Activated CD8-positive, alpha-beta T cell treated with anti-CD3 and anti-CD28 coated beads, Interleukin-2, amount 10 ng/mL, durations not matched to agents 7 days and 5 days (primary cell): ENCODE measurements at regions of chr17 and their contacts with region 1.

Region 1: GRCh38 chr17:36148559-36149295 is 27.7 kb downstream of the TBC1D3B start:
- DNase-seq: peak; percentile 76
- ATAC-seq: peak; percentile 95
- H3K4me3 Mint-ChIP-seq: no peak overlapping the region
- H3K27ac Mint-ChIP-seq: no peak overlapping the region
- H3K4me1 Mint-ChIP-seq: peaks cover 8% of the 10 kb centered on the region
- H3K27me3 Mint-ChIP-seq: peaks cover 32% of the 10 kb centered on the region

Region 2: DNA sequence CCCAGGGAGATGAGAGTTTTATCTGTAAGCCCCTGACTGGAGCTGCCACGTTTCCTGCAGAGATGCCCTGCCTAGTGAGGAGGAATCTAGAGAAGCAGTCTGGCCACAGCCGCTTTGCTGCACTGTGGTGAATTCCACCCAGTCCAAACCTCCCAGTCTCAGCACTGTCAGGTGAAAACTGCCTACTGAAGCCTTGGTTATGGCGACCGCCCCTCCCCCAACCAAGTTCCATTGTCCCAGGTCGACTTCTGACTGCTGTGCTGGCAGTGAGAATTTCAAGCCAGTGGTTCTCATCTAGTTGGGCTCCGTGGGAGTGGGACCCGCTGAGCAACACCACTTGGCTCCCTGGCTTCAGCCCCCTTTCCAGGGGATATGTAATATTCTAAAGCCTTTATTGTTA is 195.0 kb before region 1 on chr17:
- CTCF ChIA-PET with region 1: interaction called, 12 read pairs
- POLR2A ChIA-PET with region 1: no interaction called
- DNase-seq: no peak
- ATAC-seq: no peak
- H3K4me3 Mint-ChIP-seq: no peak overlapping the region
- H3K27ac Mint-ChIP-seq: no peak overlapping the region
- H3K4me1 Mint-ChIP-seq: no peaks in the 10 kb centered on the region
- H3K27me3 Mint-ChIP-seq: peaks cover 42% of the 10 kb centered on the region

Region 3: GRCh38 chr17:35969558-35970380 is 179.0 kb before region 1 on chr17:
- CTCF ChIA-PET with region 1: interaction called, 174 read pairs
- POLR2A ChIA-PET with region 1: interaction called, 5 read pairs
- DNase-seq: peak; percentile 86
- ATAC-seq: peak; percentile 72
- H3K4me3 Mint-ChIP-seq: no peak overlapping the region
- H3K27ac Mint-ChIP-seq: no peak overlapping the region
- H3K4me1 Mint-ChIP-seq: peaks cover 7% of the 10 kb centered on the region
- H3K27me3 Mint-ChIP-seq: peaks cover 6% of the 10 kb centered on the region

Region 4: GRCh38 chr17:35981908-35982330 is 166.8 kb before region 1 on chr17:
- CTCF ChIA-PET with region 1: interaction called, 174 read pairs
- POLR2A ChIA-PET with region 1: no interaction called
- DNase-seq: no peak
- ATAC-seq: no peak
- H3K4me3 Mint-ChIP-seq: no peak overlapping the region
- H3K27ac Mint-ChIP-seq: no peak overlapping the region
- H3K4me1 Mint-ChIP-seq: no peaks in the 10 kb centered on the region
- H3K27me3 Mint-ChIP-seq: peaks cover 7% of the 10 kb centered on the region

Region 5: GRCh38 chr17:36004594-36005108 is 144.1 kb before region 1 on chr17:
- CTCF ChIA-PET with region 1: interaction called, 16 read pairs
- POLR2A ChIA-PET with region 1: no interaction called
- DNase-seq: no peak
- ATAC-seq: no peak
- H3K4me3 Mint-ChIP-seq: no peak overlapping the region
- H3K27ac Mint-ChIP-seq: no peak overlapping the region
- H3K4me1 Mint-ChIP-seq: peaks cover 7% of the 10 kb centered on the region
- H3K27me3 Mint-ChIP-seq: peaks cover 2% of the 10 kb centered on the region

Region 6: GRCh38 chr17:36133602-36134236 is 15.0 kb before region 1 on chr17:
- CTCF ChIA-PET with region 1: interaction called, 11 read pairs
- POLR2A ChIA-PET with region 1: no interaction called
- DNase-seq: no peak
- ATAC-seq: no peak
- H3K4me3 Mint-ChIP-seq: no peak overlapping the region
- H3K27ac Mint-ChIP-seq: no peak overlapping the region
- H3K4me1 Mint-ChIP-seq: no peaks in the 10 kb centered on the region
- H3K27me3 Mint-ChIP-seq: peaks cover 23% of the 10 kb centered on the region

Region 7: GRCh38 chr17:36460265-36460937 is 311.7 kb after region 1 on chr17:
- CTCF ChIA-PET with region 1: no interaction called
- POLR2A ChIA-PET with region 1: no interaction called
- DNase-seq: no peak
- ATAC-seq: no peak
- H3K4me3 Mint-ChIP-seq: no peak overlapping the region
- H3K27ac Mint-ChIP-seq: no peak overlapping the region
- H3K4me1 Mint-ChIP-seq: no peaks in the 10 kb centered on the region
- H3K27me3 Mint-ChIP-seq: peaks cover 21% of the 10 kb centered on the region